Left ventricle myocardium superior (tissue), 1 donor: ENCODE measurements at regions of chr9 and their contacts with region 1.

Region 1: GRCh38 chr9:76810377-76810957 is 46.2 kb downstream of the PCA3 start:
- DNase-seq: no peak
- ATAC-seq: peak; percentile 55

Region 2: GRCh38 chr9:77063645-77064285 is 253.3 kb after region 1 on chr9:
- intact Hi-C with region 1: no loop called
- DNase-seq: no peak
- ATAC-seq: no peak

Region 3: GRCh38 chr9:77149879-77150278 is 339.4 kb after region 1 on chr9:
- intact Hi-C with region 1: loop called (anchors 2 kb)
- DNase-seq: no peak
- ATAC-seq: no peak